ENCODE measurements at regions of chr5 and their contacts with region 1.

Region 1: DNA sequence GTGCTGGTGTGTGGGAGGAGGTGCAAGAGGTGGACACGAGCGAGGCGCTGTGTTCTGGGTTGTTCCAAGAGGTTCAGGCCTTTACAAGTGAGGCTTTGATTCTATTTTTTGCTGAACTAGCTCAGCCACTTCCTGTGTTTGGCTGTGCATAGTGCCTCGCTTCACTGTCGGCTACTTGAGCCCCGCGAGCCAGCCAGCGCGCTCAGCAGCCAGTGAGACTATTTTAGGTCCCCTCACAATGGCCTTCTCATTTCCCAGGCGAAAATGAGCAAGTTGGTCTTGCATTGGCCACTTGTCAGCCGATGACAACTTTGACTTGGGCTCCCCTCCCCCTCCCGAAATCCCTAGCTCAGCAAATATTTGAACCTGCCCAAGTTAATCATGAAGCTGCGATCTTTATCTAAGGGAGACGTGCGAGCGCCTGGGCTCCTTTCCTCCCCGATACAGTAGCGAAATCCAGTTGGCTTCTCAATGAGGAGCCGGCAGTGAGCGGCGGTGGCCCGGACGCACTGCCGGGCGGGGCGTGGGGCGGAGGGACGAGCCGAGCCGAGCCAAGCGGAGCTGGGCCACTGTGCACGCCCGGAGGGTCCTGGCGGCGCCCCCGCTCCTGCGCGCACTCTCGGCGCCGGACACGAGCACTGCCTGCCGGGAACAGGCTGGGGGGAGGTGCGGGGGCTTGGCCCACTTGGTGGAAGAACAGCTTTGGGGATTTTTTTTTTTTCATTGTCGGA is 72.6 kb downstream of the PIK3R1 start:
- DNase-seq: peak; percentile 76
- H3K4me3 ChIP-seq: peak overlapping the region; percentile 71
- H3K27ac ChIP-seq: peak overlapping the region; percentile 94
- H3K4me1 ChIP-seq: peaks cover 93% of the 10 kb centered on the region
- H3K27me3 ChIP-seq: no peaks in the 10 kb centered on the region
- CTCF ChIP-seq: no peak

Region 2: GRCh38 chr5:68406767-68407241 is 118.7 kb after region 1 on chr5:
- intact Hi-C with region 1: no loop called
- DNase-seq: no peak
- H3K4me3 ChIP-seq: no peak overlapping the region
- H3K27ac ChIP-seq: no peak overlapping the region
- H3K4me1 ChIP-seq: no peaks in the 10 kb centered on the region
- H3K27me3 ChIP-seq: no peaks in the 10 kb centered on the region
- CTCF ChIP-seq: no peak

Region 3: DNA sequence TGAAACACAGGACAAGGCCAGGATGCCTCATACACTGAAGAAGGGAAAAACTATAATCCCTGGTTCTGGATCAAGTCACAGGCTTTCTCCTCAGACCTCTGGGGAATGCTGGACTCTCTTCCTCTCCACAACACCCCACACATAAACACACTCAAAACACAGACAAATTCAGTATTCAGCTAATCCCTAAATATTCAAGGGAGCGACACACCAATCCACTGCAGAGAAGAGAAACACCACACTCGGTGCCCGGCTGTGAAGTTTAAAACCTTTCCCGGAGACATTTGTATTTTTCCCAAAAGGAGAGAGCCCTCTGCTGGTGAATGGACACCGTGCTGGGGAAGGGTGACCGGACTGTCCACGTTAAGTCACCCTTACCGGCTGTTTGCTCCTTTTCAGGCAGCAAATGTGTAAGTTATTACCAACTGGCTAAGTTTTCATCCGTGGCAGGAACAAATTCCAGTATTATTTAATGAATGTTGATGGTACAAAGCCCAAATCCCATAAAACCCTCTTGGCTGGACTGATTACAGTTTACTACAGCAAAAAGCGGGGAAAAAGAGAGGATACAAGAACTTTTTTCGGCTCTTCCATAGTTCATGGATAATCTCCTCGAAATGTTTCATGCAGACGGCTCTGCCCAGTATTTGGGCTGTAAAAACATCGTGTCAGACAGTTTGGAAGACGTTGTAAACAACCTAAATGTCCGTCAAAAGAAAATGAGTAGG is 674.8 kb after region 1 on chr5:
- intact Hi-C with region 1: loop called (anchors 5 kb)
- DNase-seq: peak; percentile 57
- H3K4me3 ChIP-seq: peak overlapping the region; percentile 19
- H3K27ac ChIP-seq: no peak overlapping the region
- H3K4me1 ChIP-seq: peaks cover 6% of the 10 kb centered on the region
- H3K27me3 ChIP-seq: no peaks in the 10 kb centered on the region
- CTCF ChIP-seq: peak; percentile 87

Measured in left ventricle myocardium inferior (tissue), 1 donor.